HAP-1 (cell line): ENCODE measurements at regions of chr2 and their contacts with region 1.

Region 1: DNA sequence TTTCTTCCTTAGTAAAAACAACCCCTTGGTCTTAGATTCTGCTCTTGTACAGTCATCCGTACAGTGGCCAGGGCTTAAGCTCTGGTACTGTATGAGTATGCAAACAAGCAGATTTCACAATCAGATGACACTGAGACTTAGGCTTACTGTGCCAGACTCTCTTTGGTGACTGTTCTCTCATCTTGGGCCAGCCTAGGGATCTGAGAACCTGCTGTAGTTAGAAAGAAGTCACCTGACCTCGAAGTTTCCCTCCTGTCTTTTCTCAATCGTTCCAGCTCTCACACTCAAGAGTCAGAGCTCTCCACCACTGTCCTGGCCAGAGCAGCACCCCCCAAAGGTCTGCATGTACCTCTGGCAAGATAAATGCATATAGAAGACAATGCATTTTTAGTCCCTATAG is 63.2 kb downstream of the ZEB2 start:
- DNase-seq: no peak
- H3K4me3 ChIP-seq: no peak overlapping the region
- H3K4me1 ChIP-seq: peaks cover 47% of the 10 kb centered on the region
- H3K27me3 ChIP-seq: no peaks in the 10 kb centered on the region

Region 2: DNA sequence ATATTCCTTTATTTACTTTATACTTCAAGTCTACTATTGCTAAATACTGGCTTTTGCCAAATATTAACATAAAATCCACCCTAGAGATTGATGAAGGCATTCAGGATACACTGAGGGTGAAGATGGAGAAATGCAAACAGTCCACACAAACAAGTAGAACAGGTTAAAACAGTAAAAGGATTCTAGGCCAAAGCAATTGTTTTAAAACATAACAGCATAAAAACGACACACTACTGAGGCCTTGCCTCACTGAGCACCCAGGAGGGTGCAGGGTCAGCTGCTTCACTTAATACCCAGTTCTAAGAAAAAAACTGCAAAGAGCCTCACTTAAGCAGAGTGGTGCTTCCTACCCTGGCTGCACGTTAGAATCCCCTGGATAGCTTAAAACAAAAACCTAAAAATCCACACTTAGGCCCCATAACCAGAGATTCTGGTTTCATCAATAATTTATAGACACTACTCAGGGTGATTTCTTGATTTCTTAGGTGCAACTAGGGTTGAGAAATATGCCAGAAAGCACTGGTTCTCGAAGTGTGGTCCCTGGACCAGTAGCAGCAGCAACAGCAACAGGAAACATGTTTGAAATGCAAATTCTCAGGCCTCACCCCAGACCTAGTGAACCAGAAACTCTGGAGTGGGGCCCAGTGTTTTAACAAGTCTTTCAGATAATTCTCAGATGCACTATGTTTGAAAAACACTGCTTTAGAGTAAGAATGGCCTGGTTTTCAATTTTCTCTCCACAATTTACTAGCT is 215.9 kb before region 1 on chr2:
- in situ Hi-C with region 1: no loop called
- DNase-seq: no peak
- H3K4me3 ChIP-seq: no peak overlapping the region
- H3K4me1 ChIP-seq: peaks cover 33% of the 10 kb centered on the region
- H3K27me3 ChIP-seq: no peaks in the 10 kb centered on the region

Region 3: GRCh38 chr2:144516981-144517865 is 60.5 kb after region 1 on chr2:
- in situ Hi-C with region 1: loop called (anchors 10 kb)
- DNase-seq: peak in 1 of 2 experiments; percentile 70
- H3K4me3 ChIP-seq: peak overlapping the region; percentile 68
- H3K4me1 ChIP-seq: peaks cover 46% of the 10 kb centered on the region
- H3K27me3 ChIP-seq: no peaks in the 10 kb centered on the region

Region 4: DNA sequence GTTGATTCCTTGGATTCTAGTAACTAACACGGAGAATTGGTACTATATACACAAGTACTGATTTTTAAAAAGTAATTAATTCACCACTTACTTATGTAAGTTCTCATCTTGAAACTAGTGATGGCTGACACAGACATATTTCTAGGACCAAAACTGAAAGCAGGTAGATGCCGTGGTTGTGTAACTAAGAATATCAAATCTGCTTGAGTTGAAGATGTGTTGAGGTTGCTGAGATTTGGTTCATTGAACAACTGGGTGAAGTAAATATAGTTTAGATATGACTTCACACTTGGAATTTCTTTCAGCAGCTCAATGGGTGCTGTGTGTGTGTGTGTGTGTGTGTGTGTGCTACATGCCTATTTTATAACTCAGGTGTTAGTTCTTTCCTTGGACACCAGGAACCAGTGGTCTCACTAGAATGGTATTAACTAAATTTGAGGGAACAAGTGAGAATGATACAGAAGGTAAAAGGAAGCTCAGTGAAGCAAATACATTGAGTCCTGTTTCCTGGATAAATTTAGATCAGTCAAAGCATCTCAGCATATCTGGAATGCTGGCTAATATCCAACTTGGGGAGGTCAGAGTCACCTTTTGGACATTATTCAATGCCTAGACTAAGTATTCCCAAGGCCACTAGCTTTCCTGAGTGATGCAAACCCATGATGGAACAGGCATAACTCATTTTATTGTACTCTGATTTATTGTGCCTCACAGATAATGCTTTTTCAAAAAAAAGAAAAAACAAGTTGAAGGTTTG is 174.0 kb after region 1 on chr2:
- in situ Hi-C with region 1: no loop called
- DNase-seq: no peak
- H3K4me3 ChIP-seq: no peak overlapping the region
- H3K4me1 ChIP-seq: peaks cover 4% of the 10 kb centered on the region
- H3K27me3 ChIP-seq: no peaks in the 10 kb centered on the region

Region 5: GRCh38 chr2:144730711-144731110 is 274.0 kb after region 1 on chr2:
- in situ Hi-C with region 1: no loop called
- DNase-seq: no peak
- H3K4me3 ChIP-seq: no peak overlapping the region
- H3K4me1 ChIP-seq: 0 out of 2 replicates have a peak, but pooled peaks cover 3% of the 10 kb centered on the region
- H3K27me3 ChIP-seq: no peaks in the 10 kb centered on the region